ENCODE measurements at regions of chr2 and their contacts with region 1.

Region 1: GRCh38 chr2:218301176-218301819 is 9.0 kb upstream of the TMBIM1 start:
- DNase-seq: peak; percentile 92 to 94 (median 93)
- ATAC-seq: peak; percentile 96
- H3K4me3 ChIP-seq: no peak overlapping the region
- H3K27ac ChIP-seq: peak overlapping the region in 2 of 4 donors; percentile 19 to 58
- H3K4me1 ChIP-seq: peaks cover 37% of the 10 kb centered on the region
- H3K27me3 ChIP-seq: no peaks in the 10 kb centered on the region
- CTCF ChIP-seq: peak; percentile 83 to 98 (median 98)
- POLR2A ChIP-seq: no peak

Region 2: GRCh38 chr2:218245214-218245613 is 56.1 kb before region 1 on chr2:
- intact Hi-C with region 1: no loop called
- DNase-seq: no peak
- ATAC-seq: no peak
- H3K4me3 ChIP-seq: no peak overlapping the region
- H3K27ac ChIP-seq: no peak overlapping the region
- H3K4me1 ChIP-seq: no peaks in the 10 kb centered on the region
- H3K27me3 ChIP-seq: no peaks in the 10 kb centered on the region
- CTCF ChIP-seq: no peak
- POLR2A ChIP-seq: no peak

Region 3: GRCh38 chr2:218357236-218358159 is 56.2 kb after region 1 on chr2:
- intact Hi-C with region 1: loop called (anchors 5 kb)
- DNase-seq: peak in 1 of 4 donors; percentile 12
- ATAC-seq: no peak
- H3K4me3 ChIP-seq: no peak overlapping the region
- H3K27ac ChIP-seq: peak overlapping the region; percentile 16 to 76 (median 66)
- H3K4me1 ChIP-seq: peaks cover 26% of the 10 kb centered on the region
- H3K27me3 ChIP-seq: no peaks in the 10 kb centered on the region
- CTCF ChIP-seq: no peak
- POLR2A ChIP-seq: peak in 1 of 3 donors; percentile 12

Region 4: DNA sequence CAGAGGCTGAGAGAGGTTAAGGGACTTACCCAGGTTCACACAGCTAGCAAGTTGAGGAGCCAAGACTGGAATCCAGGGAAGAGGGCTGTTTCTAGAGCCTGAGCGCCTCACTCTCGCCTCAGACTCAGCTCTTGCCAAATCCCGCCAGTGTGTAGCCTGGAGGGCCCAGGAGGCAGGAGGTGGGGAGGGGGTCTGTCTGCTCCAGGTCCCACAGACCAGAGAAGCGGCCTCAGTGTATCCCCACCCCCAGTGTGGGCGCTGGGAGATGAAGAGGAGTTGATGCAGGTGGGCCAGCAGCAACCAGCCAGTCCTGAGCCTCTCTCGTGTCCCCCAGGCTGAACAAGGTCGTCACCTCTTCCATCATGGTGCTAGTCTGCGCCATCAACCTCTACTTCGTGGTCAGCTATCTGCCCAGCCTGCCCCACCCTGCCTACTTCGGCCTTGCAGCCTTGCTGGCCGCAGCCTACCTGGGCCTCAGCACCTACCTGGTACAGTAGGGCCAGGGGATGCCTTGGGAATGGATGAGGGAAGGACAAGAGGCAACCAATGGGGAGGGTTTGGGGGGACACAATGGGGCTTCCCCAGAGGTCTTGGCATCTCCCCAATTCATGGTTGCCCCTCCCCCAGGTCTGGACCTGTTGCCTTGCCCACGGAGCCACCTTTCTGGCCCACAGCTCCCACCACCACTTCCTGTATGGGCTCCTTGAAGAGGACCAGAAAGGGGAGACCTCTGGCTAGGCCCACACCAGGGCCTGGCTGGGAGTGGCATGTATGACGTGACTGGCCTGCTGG is 93.2 kb after region 1 on chr2:
- intact Hi-C with region 1: loop called (anchors 5 kb)
- DNase-seq: peak in 1 of 4 donors; percentile 26
- ATAC-seq: no peak
- H3K4me3 ChIP-seq: no peak overlapping the region
- H3K27ac ChIP-seq: peak overlapping the region in 1 of 4 donors; percentile 100
- H3K4me1 ChIP-seq: peaks cover 36% of the 10 kb centered on the region
- H3K27me3 ChIP-seq: no peaks in the 10 kb centered on the region
- CTCF ChIP-seq: no peak
- POLR2A ChIP-seq: no peak